HepG2 (cell line): ENCODE measurements at regions of chr12 and their contacts with region 1.

Region 1: DNA sequence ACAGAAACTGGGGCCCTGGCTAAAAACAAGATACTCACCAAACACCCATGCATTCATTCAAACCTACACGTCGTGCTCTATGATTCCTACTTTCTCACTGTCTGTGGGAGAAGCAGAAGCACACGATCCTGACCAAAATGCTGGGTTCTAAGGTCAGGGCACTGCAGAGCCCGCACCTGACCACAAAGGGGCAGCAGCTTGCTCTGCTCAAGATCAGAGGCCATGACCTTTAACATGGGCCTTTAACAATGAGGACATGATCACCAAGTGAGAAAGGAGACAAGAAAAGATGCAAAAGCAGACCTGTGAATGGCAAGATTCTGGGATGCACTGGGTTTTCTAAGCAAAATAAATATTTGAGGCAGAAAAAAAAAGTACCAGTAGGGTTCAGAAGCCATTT is 40.1 kb upstream of the VPS33A start:
- DNase-seq: peak; percentile 21
- ATAC-seq: peak; percentile 82
- H3K4me3 ChIP-seq: no peak overlapping the region
- H3K27ac ChIP-seq: no peak overlapping the region
- H3K4me1 ChIP-seq: peaks cover 6% of the 10 kb centered on the region; the same call in 1 of the 2 replicates
- H3K27me3 ChIP-seq: no peaks in the 10 kb centered on the region
- CTCF ChIP-seq: peak; percentile 70
- EP300 ChIP-seq: no peak
- POLR2A ChIP-seq: no peak
- RAD21 ChIP-seq: no peak

Region 2: DNA sequence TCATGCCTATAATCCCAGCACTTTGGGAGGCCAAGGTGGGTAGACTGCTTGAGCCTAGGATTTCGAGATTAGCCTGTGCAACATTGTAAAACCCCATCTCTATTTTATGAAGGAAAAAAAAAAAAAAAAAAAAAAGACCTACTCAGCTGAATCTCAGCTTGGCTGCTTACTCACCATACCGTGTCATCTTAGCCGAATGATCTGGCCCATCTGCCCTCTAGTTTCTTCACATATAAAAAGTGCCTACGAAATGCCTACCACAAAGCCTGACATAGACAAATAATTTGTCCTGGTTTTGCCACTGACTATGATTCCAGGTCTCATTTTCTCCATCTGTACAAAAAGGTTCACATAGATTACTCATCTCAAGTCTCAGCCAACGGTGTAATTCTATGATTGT is 90.6 kb before region 1 on chr12:
- CTCF ChIA-PET with region 1: no interaction called
- POLR2A ChIA-PET with region 1: no interaction called
- in situ Hi-C with region 1: no loop called
- intact Hi-C with region 1: no loop called
- DNase-seq: no peak
- ATAC-seq: no peak
- H3K4me3 ChIP-seq: no peak overlapping the region
- H3K27ac ChIP-seq: no peak overlapping the region
- H3K4me1 ChIP-seq: no peaks in the 10 kb centered on the region
- H3K27me3 ChIP-seq: no peaks in the 10 kb centered on the region
- CTCF ChIP-seq: no peak
- EP300 ChIP-seq: no peak
- POLR2A ChIP-seq: no peak
- RAD21 ChIP-seq: no peak

Region 3: DNA sequence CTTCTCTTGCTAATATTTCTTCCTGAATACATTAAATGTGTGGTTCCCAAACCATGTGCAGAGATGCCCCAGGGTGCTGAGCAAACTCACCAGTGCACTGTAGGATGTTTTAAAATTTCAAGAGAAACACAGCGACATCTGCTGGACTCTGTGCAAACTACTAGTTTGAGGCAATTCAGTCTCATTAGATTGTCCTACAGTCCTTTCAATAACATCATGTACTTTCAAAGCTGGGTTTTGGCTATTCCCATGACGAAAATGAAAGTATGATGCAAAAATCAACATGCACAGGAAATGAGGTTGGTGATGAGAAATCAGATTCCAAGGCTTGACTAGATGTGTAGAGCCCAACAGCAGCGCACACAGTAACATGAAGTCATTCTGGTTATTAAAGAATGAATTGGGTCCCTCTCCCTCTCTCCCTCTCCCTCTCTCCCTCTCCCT is 49.8 kb after region 1 on chr12:
- CTCF ChIA-PET with region 1: no interaction called
- POLR2A ChIA-PET with region 1: no interaction called
- in situ Hi-C with region 1: no loop called
- intact Hi-C with region 1: loop called (anchors 2 kb)
- DNase-seq: peak; percentile 54
- ATAC-seq: peak; percentile 88
- H3K4me3 ChIP-seq: no peak overlapping the region
- H3K27ac ChIP-seq: no peak overlapping the region
- H3K4me1 ChIP-seq: peaks cover 1% of the 10 kb centered on the region
- H3K27me3 ChIP-seq: no peaks in the 10 kb centered on the region
- CTCF ChIP-seq: peak; percentile 75
- EP300 ChIP-seq: no peak
- POLR2A ChIP-seq: no peak
- RAD21 ChIP-seq: 0 out of 2 replicates have a peak, but pooled peaks have one; percentile 22

Region 4: DNA sequence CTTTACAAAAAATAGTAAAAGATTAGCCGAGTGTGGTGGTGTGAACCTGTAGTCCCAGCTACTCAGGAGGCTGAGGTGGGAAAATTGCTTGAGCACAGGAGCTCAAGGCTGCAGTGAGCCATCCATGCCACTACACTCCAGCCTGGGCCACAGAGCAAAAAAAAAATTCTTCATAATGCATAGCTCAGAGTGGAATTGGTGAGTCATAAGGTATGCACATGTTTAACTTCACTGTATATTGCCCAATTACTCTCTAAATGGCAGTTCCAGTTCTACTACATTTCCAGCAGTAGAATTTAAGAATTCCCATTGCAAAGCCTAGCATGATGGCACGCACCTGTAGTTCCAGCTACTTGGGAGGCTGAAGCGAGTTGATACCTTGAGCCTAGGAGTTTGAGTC is 142.9 kb after region 1 on chr12:
- CTCF ChIA-PET with region 1: no interaction called
- POLR2A ChIA-PET with region 1: no interaction called
- in situ Hi-C with region 1: no loop called
- intact Hi-C with region 1: no loop called
- DNase-seq: peak; percentile 82
- ATAC-seq: peak; percentile 80
- H3K4me3 ChIP-seq: no peak overlapping the region
- H3K27ac ChIP-seq: no peak overlapping the region
- H3K4me1 ChIP-seq: peaks cover 42% of the 10 kb centered on the region
- H3K27me3 ChIP-seq: no peaks in the 10 kb centered on the region
- CTCF ChIP-seq: no peak
- EP300 ChIP-seq: peak in 1 of 2 experiments; percentile 57; a peak in 1 of 4 replicates
- POLR2A ChIP-seq: no peak
- RAD21 ChIP-seq: no peak